Activated CD4-positive, alpha-beta memory T cell treated with anti-CD3 and anti-CD28 coated beads for 36 hours (primary cell): ENCODE measurements at regions of chr15 and their contacts with region 1.

Region 1: GRCh38 chr15:41904541-41905005 is 10.7 kb upstream of the SPTBN5 start:
- DNase-seq: peak; percentile 81
- H3K4me3 Mint-ChIP-seq: no peak overlapping the region
- H3K27ac Mint-ChIP-seq: peak overlapping the region; percentile 54
- H3K4me1 Mint-ChIP-seq: peaks cover 9% of the 10 kb centered on the region
- H3K27me3 Mint-ChIP-seq: no peaks in the 10 kb centered on the region

Region 2: DNA sequence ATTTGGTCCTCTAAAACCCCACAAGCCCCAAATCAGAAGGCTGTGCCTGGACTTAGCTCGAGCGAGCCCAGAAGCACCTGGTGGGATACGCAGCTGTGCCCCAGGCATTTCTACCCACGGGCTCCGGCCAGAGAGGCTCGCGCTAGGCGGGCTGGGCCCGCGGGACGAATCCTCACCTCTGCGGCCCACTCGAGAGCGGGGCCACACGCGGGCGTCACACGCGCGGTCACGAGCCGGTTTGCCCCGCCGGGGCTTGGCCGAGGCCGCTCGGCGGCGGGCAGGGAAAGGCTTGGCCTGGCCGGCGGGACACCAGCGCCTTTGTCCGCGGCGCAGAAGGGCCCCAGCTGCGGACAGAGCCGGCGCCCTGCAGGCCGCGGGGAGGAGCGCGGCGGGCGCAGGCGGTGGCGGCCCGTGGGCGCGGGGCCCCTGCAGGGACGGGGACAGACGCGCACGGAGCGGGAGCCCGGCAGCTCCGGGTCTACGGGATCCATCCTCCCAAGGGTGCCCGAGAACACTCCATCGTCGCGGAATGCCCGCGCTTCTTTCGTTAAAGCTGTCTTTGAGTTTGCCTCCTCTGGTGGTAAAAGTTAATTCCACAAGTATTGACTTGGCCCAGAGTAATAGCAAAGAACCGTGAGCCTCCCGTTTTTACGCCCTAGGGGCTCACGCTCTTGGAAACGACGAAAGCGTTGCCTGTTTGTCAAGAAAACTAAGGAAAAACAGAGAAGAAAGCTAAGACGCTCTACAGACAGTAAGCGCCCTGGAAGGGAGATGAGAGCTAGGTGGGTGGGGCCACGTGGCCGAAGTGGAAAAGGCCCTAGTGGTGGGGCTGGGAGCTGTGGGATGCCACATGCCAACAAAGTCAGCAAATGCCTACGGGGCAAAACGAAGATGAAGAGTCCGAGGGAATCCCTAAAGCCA is 319.2 kb before region 1 on chr15:
- CTCF ChIA-PET with region 1: no interaction called
- POLR2A ChIA-PET with region 1: no interaction called
- intact Hi-C with region 1: loop called (anchors 10 kb)
- DNase-seq: peak; percentile 59
- H3K4me3 Mint-ChIP-seq: peak overlapping the region; percentile 57
- H3K27ac Mint-ChIP-seq: no peak overlapping the region
- H3K4me1 Mint-ChIP-seq: peaks cover 7% of the 10 kb centered on the region
- H3K27me3 Mint-ChIP-seq: peaks cover 20% of the 10 kb centered on the region

Region 3: GRCh38 chr15:41827880-41828806 is 76.4 kb before region 1 on chr15 and contains the start of gene JMJD7:
- CTCF ChIA-PET with region 1: interaction called, 12 read pairs
- POLR2A ChIA-PET with region 1: interaction called, 3 read pairs
- intact Hi-C with region 1: loop called (anchors 1 kb)
- DNase-seq: peak; percentile 96
- H3K4me3 Mint-ChIP-seq: peak within 1 kb of the TSS; percentile 80
- H3K27ac Mint-ChIP-seq: peak within 1 kb of the TSS; percentile 52
- H3K4me1 Mint-ChIP-seq: peaks cover 40% of the 10 kb centered on the region
- H3K27me3 Mint-ChIP-seq: no peaks in the 10 kb centered on the region
- total RNA-seq, gene JMJD7: 17.9 to 24.8 TPM

Region 4: DNA sequence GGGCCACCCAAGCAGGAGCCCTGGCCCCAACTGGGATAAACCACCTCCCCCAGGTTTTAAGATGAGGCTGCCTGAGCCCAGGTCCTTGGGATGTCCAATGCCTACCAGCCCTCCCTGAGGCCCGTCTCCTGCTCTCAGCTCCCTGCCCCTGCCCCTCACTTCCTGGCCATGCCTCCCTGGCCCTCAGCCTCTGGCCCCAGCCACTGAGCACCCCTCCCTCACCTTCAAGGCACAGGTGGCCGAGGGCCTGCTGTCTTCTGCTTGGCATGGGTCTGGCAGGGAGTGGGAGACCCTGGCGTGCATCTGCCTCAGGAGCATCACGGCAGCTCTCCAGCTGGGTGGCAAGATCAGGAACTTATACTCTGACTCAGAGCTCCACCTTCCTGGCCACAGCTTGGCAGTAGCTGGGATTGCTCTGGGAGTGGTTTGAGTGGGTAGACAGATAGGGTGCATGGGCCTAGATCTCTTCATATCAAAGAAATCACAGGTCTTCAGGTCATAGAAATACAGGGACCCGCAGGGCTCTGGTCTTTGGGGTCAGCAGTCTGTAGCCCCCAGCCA is 116.2 kb after region 1 on chr15 and contains the start of gene PLA2G4E:
- CTCF ChIA-PET with region 1: no interaction called
- POLR2A ChIA-PET with region 1: no interaction called
- intact Hi-C with region 1: no loop called
- DNase-seq: no peak
- H3K4me3 Mint-ChIP-seq: no peak within 1 kb of the TSS
- H3K27ac Mint-ChIP-seq: no peak within 1 kb of the TSS
- H3K4me1 Mint-ChIP-seq: no peaks in the 10 kb centered on the region
- H3K27me3 Mint-ChIP-seq: peaks cover 1% of the 10 kb centered on the region
- total RNA-seq, gene PLA2G4E: not detected

Region 5: DNA sequence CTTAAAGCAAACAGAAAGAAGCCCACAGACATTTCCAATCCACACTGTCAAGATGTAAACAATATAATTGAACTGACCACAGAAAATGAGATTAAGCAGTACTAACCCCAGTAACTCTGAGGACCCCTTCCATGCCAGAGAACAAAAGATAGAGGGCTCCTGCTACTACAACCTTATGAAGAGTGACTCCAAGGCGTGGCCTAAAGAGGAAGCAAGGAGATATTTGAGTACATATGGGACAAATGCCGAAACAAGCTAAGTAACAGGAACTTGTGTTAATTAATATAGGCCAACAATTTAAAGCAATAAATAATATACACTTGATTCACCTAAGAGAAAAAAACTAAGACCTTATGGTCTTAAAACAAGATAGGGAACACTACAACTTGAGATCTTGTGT is 328.5 kb after region 1 on chr15:
- CTCF ChIA-PET with region 1: no interaction called
- POLR2A ChIA-PET with region 1: no interaction called
- intact Hi-C with region 1: no loop called
- DNase-seq: no peak
- H3K4me3 Mint-ChIP-seq: no peak overlapping the region
- H3K27ac Mint-ChIP-seq: no peak overlapping the region
- H3K4me1 Mint-ChIP-seq: no peaks in the 10 kb centered on the region
- H3K27me3 Mint-ChIP-seq: no peaks in the 10 kb centered on the region